Transverse colon (tissue), 4 donors: ENCODE measurements at regions of chr14 and their contacts with region 1.

Region 1: DNA sequence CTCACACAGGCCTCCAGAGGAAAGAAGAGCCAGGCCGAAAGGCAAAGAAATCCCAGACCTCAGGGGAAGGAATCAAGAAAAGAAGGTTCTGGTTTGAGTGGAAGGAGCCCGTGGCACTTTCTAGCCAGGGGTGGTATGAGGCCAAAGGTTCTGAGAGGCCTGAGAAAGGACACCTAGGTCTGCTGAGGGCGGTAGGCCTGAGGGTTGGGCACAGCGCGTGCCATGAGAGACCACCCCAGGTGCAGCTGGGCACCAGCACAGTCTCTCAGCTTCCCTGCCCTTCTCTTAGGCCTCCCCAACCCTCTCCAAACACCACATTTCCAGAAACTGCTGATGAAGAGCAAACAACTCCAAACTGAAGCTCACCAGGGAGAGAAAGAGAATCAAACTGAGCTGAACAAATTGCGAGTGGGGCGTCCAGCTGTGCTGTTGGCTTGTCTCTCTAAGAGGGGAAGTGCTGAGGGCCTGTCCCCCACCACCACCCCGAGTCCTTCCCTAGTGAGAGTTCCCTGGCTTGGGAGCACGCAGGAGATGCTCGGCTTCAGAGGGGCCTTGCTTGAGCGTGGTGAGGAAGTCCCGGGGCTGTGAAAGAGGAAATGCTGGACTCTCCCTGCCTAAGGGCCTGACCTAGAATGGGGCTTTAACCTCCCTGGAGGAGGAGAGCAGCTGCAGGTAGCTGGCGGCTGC is 184.8 kb downstream of the ZFP36L1 start:
- DNase-seq: peak; percentile 35
- H3K4me3 ChIP-seq: no peak overlapping the region
- H3K27ac ChIP-seq: peak overlapping the region; percentile 76 to 82 (median 79)
- H3K4me1 ChIP-seq: peaks cover 22 to 55% (median 29%) of the 10 kb centered on the region in 4 donors
- H3K27me3 ChIP-seq: no peaks in the 10 kb centered on the region
- CTCF ChIP-seq: no peak
- EP300 ChIP-seq: no peak
- POLR2A ChIP-seq: no peak

Region 2: DNA sequence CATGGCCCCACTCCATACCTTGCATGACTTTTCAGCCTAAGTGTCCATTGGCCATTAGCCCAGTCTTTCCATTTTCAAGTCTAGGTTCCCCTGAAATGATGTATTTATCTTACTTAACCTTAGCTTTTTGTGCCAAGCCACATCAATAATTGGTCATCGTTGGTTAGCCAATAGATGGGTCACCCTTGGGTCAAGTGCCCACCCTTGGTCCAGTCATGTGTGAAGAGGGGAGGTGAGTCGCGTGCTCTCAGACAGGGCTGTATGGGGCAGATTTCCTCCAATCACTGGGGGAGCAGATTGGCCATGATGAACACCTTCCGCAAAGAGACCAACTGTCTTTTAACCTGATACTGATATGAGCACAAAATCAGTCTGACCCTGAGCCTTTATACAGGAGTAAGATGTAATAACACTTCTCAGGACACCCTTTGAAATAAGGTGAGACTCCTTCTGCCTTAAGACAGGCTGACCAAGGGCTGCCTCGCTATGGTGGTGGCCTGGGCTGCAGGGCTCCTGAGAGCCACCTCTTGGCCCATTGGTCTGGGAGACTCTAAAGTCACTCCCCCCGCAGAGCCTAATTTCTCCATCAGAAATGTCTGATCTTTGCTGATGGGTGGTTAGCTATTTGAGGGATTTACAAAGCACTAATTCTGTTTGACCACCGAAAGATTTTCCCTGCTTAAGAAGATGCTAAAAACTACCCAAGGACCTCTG is 41.6 kb after region 1 on chr14:
- in situ Hi-C with region 1: no loop called
- intact Hi-C with region 1: loop called (anchors 1 kb)
- DNase-seq: no peak
- H3K4me3 ChIP-seq: no peak overlapping the region
- H3K27ac ChIP-seq: peak overlapping the region; percentile 76 to 91 (median 84)
- H3K4me1 ChIP-seq: peaks cover 8 to 32% (median 13%) of the 10 kb centered on the region in 4 donors
- H3K27me3 ChIP-seq: no peaks in the 10 kb centered on the region
- CTCF ChIP-seq: no peak
- EP300 ChIP-seq: no peak
- POLR2A ChIP-seq: no peak